Activated B cell treated with CpG ODN at 0.5 μM for 24 hours (primary cell): ENCODE measurements at regions of chr15 and their contacts with region 1.

Region 1: GRCh38 chr15:99928429-99928981 is 195.3 kb upstream of the LYSMD4 start:
- DNase-seq: peak; percentile 85
- ATAC-seq: peak; percentile 92
- H3K4me3 Mint-ChIP-seq: peak overlapping the region; percentile 86
- H3K27ac Mint-ChIP-seq: peak overlapping the region; percentile 78
- H3K4me1 Mint-ChIP-seq: peaks cover 16% of the 10 kb centered on the region
- H3K27me3 Mint-ChIP-seq: peaks cover 4% of the 10 kb centered on the region
- CTCF ChIP-seq: no peak

Region 2: GRCh38 chr15:97960364-97961066 is 1968.0 kb before region 1 on chr15 and contains the start of gene ARRDC4:
- CTCF ChIA-PET with region 1: no interaction called
- POLR2A ChIA-PET with region 1: no interaction called
- intact Hi-C with region 1: loop called (anchors 5 kb)
- DNase-seq: peak; percentile 88
- ATAC-seq: peak; percentile 94
- H3K4me3 Mint-ChIP-seq: peak within 1 kb of the TSS; percentile 80
- H3K27ac Mint-ChIP-seq: peak within 1 kb of the TSS; percentile 81
- H3K4me1 Mint-ChIP-seq: peaks cover 26% of the 10 kb centered on the region
- H3K27me3 Mint-ChIP-seq: peaks cover 3% of the 10 kb centered on the region
- CTCF ChIP-seq: no peak
- total RNA-seq, gene ARRDC4: 1.8 and 2.0 TPM in 2 replicates

Region 3: DNA sequence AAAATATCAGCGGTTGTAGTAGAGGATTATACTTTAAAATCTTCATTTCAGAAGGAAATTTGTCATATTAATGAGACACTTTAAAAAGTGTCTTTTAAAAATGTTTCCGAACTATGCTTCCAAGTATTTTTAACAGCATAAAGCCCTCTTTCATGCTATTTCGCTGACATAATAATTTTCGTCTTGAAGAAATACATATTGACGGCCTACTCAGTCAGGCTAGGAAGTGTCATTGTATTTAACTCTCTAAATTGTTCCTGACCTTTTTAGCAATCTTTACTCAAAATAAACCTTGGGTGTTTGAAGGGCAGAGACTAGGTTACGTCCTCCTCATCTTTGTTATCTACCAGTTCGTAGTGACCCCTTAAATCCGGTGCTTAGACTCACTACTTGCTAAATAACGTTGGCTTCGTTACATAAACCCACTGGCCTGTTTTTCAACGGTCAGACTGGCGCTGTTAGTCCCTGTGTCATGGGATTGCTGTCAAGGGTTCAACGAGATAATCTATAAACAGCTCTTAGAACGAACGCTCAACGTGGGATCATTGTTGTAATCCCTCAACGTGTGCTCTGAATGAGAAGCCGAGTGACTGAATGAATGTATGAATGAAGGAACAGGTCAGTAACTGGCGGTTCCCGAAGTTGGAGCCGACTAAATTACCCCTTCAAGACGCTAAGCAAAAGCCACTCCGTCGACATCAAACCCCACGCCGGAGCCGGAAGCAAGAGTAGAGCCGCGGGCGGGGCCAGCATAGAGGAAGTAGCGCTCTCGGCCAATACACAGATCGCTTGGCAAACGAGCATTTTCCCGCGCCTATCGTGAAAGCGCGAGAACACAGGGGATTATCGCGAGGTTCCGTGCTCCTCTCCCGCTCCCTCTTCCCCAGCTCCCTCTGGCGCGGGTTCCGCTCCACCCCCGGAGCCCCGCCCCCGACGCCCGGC is 677.7 kb before region 1 on chr15:
- CTCF ChIA-PET with region 1: no interaction called
- POLR2A ChIA-PET with region 1: interaction called, 4 read pairs
- intact Hi-C with region 1: loop called (anchors 5 kb)
- DNase-seq: peak; percentile 85
- ATAC-seq: peak; percentile 97
- H3K4me3 Mint-ChIP-seq: peak overlapping the region; percentile 91
- H3K27ac Mint-ChIP-seq: peak overlapping the region; percentile 89
- H3K4me1 Mint-ChIP-seq: peaks cover 29% of the 10 kb centered on the region
- H3K27me3 Mint-ChIP-seq: no peaks in the 10 kb centered on the region
- CTCF ChIP-seq: no peak

Region 4: GRCh38 chr15:100341662-100342560 is 413.4 kb after region 1 on chr15 and contains the start of gene ADAMTS17:
- CTCF ChIA-PET with region 1: no interaction called
- POLR2A ChIA-PET with region 1: no interaction called
- intact Hi-C with region 1: loop called (anchors 2 kb)
- DNase-seq: peak; percentile 70
- ATAC-seq: peak; percentile 99
- H3K4me3 Mint-ChIP-seq: peak within 1 kb of the TSS; percentile 50
- H3K27ac Mint-ChIP-seq: no peak within 1 kb of the TSS
- H3K4me1 Mint-ChIP-seq: peaks cover 9% of the 10 kb centered on the region
- H3K27me3 Mint-ChIP-seq: peaks cover 29% of the 10 kb centered on the region
- CTCF ChIP-seq: no peak
- total RNA-seq, gene ADAMTS17: 1.6 TPM in 1 of 2 replicates, not detected in the other

Region 5: DNA sequence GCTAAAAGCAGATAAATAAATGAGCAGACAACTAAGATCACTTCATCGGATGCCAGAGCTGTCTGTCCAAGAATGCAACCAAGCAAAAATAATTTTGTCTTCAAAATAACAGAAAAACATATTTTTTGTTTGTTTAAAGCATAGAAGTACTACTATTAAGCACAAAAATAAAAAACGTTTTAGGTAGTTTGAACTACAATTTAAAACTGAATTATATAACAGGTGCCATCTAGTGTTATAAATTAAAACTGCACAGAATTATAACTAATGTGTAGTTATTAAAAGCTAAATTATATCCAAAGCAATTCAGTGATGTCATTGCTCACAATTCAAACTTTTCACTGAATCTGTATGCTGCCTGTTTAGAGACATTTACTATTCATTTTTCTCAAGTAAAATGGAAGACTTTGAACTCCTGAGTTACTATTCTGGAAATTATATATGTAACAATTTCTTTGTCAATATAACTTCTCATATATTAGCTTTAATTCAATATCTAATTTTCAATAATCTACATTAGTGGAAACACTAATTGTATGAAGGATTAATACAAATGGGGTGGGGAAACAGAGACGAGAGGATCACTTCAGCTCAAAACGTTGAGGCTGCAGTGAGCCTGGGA is 644.0 kb after region 1 on chr15:
- CTCF ChIA-PET with region 1: interaction called, 7 read pairs
- POLR2A ChIA-PET with region 1: no interaction called
- intact Hi-C with region 1: loop called (anchors 2 kb)
- DNase-seq: no peak
- ATAC-seq: peak; percentile 31
- H3K4me3 Mint-ChIP-seq: no peak overlapping the region
- H3K27ac Mint-ChIP-seq: no peak overlapping the region
- H3K4me1 Mint-ChIP-seq: peaks cover 3% of the 10 kb centered on the region
- H3K27me3 Mint-ChIP-seq: no peaks in the 10 kb centered on the region
- CTCF ChIP-seq: no peak

Region 6: GRCh38 chr15:101008158-101009139 is 1079.9 kb after region 1 on chr15:
- CTCF ChIA-PET with region 1: no interaction called
- POLR2A ChIA-PET with region 1: no interaction called
- intact Hi-C with region 1: loop called (anchors 5 kb)
- DNase-seq: peak; percentile 89
- ATAC-seq: peak; percentile 96
- H3K4me3 Mint-ChIP-seq: peak overlapping the region; percentile 85
- H3K27ac Mint-ChIP-seq: no peak overlapping the region
- H3K4me1 Mint-ChIP-seq: peaks cover 23% of the 10 kb centered on the region
- H3K27me3 Mint-ChIP-seq: no peaks in the 10 kb centered on the region
- CTCF ChIP-seq: peak; percentile 62

Region 7: DNA sequence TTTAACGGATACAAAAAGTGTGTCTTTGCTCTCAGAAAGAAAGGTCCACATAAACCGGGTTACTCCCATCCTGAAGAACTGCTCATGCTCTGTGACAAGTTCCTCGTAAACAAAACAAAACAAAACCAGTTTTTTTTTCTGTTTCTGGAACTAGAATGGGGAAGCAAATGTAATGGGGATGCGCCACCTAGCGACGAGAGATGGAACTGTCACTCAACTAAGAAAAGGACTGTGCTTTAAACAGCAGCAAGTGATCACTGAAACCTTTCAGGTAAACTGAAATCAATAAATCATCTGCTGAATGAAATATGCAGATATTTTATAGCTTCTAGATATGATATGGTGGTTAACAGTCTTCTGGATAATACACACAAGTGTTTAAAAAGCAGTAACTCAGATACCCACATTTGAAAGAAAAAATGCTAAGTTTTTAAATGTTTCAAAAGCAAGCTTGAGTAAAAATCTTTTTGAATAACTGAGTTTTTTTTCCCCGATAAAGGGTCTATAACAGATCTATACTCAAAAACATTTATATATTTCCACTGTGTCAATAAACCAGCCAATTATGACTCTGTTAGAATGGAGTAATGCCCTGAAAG is 1712.8 kb after region 1 on chr15:
- CTCF ChIA-PET with region 1: no interaction called
- POLR2A ChIA-PET with region 1: interaction called, 13 read pairs
- intact Hi-C with region 1: no loop called
- DNase-seq: peak; percentile 55
- ATAC-seq: peak; percentile 56
- H3K4me3 Mint-ChIP-seq: no peak overlapping the region
- H3K27ac Mint-ChIP-seq: peak overlapping the region; percentile 76
- H3K4me1 Mint-ChIP-seq: peaks cover 23% of the 10 kb centered on the region
- H3K27me3 Mint-ChIP-seq: no peaks in the 10 kb centered on the region
- CTCF ChIP-seq: peak; percentile 39